Aorta (tissue), 5 donors: ENCODE measurements at regions of chr18 and their contacts with region 1.

Region 1: GRCh38 chr18:42341423-42341822 is 386.4 kb downstream of the PIK3C3 start:
- DNase-seq: no peak
- ATAC-seq: no peak
- H3K4me3 ChIP-seq: no peak overlapping the region
- H3K27ac ChIP-seq: no peak overlapping the region
- H3K4me1 ChIP-seq: no peaks in the 10 kb centered on the region
- H3K27me3 ChIP-seq: no peaks in the 10 kb centered on the region

Region 2: GRCh38 chr18:42064109-42064508 is 277.3 kb before region 1 on chr18:
- intact Hi-C with region 1: no loop called
- DNase-seq: no peak
- ATAC-seq: no peak
- H3K4me3 ChIP-seq: no peak overlapping the region
- H3K27ac ChIP-seq: no peak overlapping the region
- H3K4me1 ChIP-seq: no peaks in the 10 kb centered on the region
- H3K27me3 ChIP-seq: no peaks in the 10 kb centered on the region

Region 3: GRCh38 chr18:42401131-42401673 is 59.8 kb after region 1 on chr18:
- intact Hi-C with region 1: loop called in 1 of 2 experiments (anchors 10 kb)
- DNase-seq: no peak
- ATAC-seq: no peak
- H3K4me3 ChIP-seq: no peak overlapping the region
- H3K27ac ChIP-seq: no peak overlapping the region
- H3K4me1 ChIP-seq: no peaks in the 10 kb centered on the region
- H3K27me3 ChIP-seq: no peaks in the 10 kb centered on the region